Activated CD4-positive, alpha-beta memory T cell treated with anti-CD3 and anti-CD28 coated beads, Interleukin-2, amount 10 ng/mL, durations not matched to agents 7 days and 5 days (primary cell): ENCODE measurements at regions of chrX and their contacts with region 1.

Region 1: GRCh38 chrX:45806410-45807121 is 605.9 kb upstream of the DIPK2B start:
- DNase-seq: peak; percentile 58
- H3K4me3 Mint-ChIP-seq: peak overlapping the region; percentile 76
- H3K27ac Mint-ChIP-seq: peak overlapping the region; percentile 93
- H3K4me1 Mint-ChIP-seq: peaks cover 90% of the 10 kb centered on the region
- H3K27me3 Mint-ChIP-seq: no peaks in the 10 kb centered on the region

Region 2: DNA sequence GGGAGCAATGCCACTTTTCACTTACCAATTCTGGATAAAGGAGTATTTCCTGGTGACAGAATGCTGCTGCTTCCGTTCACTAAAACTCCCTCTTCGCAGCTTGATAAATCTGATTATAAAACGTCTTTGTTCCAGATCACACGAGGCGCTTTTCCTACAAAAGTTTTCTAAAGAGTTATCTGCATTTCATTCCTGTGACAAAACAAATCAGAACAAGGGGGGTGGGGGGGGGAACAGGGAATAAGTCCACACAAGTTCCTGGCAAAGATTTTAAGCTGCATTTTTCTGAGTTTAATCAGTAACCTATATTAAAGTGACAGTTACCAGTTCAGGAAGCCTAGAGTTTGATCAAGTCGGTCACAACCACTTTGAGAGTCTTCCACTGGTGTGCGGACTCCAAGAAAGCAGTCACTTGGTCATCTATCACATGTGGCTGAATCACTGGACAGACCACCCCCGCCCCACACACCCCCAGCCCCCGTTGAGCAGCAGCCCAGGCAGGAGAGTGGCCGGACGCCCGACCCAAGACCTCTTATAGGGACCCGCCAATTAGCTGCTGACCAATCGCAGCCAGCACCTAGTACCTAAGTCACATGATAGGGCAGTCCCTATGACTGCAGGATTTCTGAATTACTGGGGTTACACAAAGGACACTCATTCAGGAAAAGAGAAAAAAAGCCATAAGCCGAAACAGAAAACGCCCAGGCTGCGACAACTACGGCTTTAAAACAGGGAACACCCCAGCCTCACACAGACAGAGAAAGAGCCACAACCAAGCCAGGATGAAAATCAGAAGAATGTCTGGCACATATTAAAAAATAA is 36.6 kb before region 1 on chrX:
- CTCF ChIA-PET with region 1: interaction called, 6 read pairs
- POLR2A ChIA-PET with region 1: interaction called, 17 read pairs
- DNase-seq: peak; percentile 49
- H3K4me3 Mint-ChIP-seq: peak overlapping the region; percentile 86
- H3K27ac Mint-ChIP-seq: peak overlapping the region; percentile 87
- H3K4me1 Mint-ChIP-seq: peaks cover 59% of the 10 kb centered on the region
- H3K27me3 Mint-ChIP-seq: no peaks in the 10 kb centered on the region

Region 3: DNA sequence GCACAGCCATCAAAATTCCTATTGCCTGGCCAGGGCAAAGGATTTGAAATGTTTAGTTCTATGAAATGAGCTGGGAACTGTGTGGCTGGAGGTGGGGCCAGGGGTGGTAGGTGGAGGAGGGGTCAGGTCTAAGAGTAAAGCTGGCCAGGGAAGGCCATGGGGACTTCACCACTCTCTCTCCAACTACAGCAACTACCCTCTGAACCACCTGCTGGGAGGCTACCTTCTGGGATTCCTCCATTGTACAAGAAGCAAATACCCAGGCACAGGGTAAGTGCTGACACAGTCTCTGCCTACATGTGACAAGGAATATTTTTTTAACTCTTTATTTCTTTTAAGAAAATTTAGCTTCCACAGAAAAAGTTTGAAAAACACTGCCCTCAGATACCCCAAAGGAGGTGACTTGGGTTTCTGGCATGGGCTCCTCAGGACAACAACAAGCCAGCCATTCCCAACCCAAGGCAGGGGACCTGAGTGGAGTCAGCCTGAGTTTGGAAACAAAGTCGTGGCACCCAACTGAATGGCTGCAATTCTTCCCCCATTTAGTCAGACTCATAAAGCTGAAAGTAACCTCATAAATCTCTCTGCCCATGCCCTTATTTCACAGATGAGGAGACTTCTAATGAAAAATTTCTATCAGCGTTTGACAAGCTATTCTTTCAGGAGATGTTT is 12.1 kb before region 1 on chrX:
- CTCF ChIA-PET with region 1: interaction called, 4 read pairs
- POLR2A ChIA-PET with region 1: interaction called, 10 read pairs
- DNase-seq: no peak
- H3K4me3 Mint-ChIP-seq: no peak overlapping the region
- H3K27ac Mint-ChIP-seq: peak overlapping the region; percentile 19
- H3K4me1 Mint-ChIP-seq: peaks cover 84% of the 10 kb centered on the region
- H3K27me3 Mint-ChIP-seq: no peaks in the 10 kb centered on the region

Region 4: DNA sequence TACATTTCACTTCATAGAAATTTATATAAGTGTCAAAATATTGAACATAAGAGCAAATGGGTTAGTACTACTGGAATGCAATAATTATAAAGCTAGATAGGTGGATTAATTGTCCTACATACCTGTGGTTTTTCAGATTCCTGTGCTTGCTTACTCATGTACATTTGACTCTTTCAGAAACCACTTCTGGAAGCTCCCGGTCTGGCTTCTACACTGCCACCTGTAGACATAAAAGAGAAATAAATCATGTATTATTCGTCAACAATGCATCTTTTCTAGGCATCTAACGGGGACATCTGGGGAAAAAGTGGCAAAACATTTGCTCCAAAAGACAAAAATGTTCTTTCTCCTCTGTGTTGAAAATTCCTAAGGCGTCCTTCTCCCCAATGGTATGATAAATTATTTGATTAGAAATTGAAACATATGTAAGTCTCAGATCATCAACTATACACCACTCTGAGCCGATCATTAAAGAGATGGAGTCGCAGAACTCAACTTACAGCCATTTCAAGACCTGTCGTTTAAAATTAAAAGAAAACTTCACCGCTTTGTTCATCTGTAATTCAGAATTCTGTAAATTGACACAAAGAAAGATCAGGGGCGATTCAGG is 42.8 kb after region 1 on chrX:
- CTCF ChIA-PET with region 1: interaction called, 11 read pairs
- POLR2A ChIA-PET with region 1: interaction called, 15 read pairs
- DNase-seq: peak; percentile 30
- H3K4me3 Mint-ChIP-seq: peak overlapping the region; percentile 99
- H3K27ac Mint-ChIP-seq: peak overlapping the region; percentile 89
- H3K4me1 Mint-ChIP-seq: peaks cover 54% of the 10 kb centered on the region
- H3K27me3 Mint-ChIP-seq: no peaks in the 10 kb centered on the region